ENCODE measurements at regions of chr2 and their contacts with region 1.

Region 1: GRCh38 chr2:135913727-135914365 is 37.6 kb upstream of the MCM6 start:
- DNase-seq: peak in 1 of 2 donors; percentile 84
- ATAC-seq: peak; percentile 59 to 71 (median 70)
- H3K4me3 ChIP-seq: no peak overlapping the region
- H3K4me3 Mint-ChIP-seq: no peak overlapping the region
- H3K27ac ChIP-seq: no peak overlapping the region
- H3K27ac Mint-ChIP-seq: no peak overlapping the region
- H3K4me1 ChIP-seq: no peaks in the 10 kb centered on the region
- H3K4me1 Mint-ChIP-seq: no peaks in the 10 kb centered on the region
- H3K27me3 ChIP-seq: no peaks in the 10 kb centered on the region
- H3K27me3 Mint-ChIP-seq: no peaks in the 10 kb centered on the region
- CTCF ChIP-seq: peak; percentile 94

Region 2: GRCh38 chr2:136378712-136379595 is 465.1 kb after region 1 on chr2:
- intact Hi-C with region 1: loop called (anchors 1 kb)
- DNase-seq: peak; percentile 54 to 90
- ATAC-seq: peak; percentile 61 to 77 (median 76)
- H3K4me3 ChIP-seq: no peak overlapping the region
- H3K4me3 Mint-ChIP-seq: no peak overlapping the region
- H3K27ac ChIP-seq: no peak overlapping the region
- H3K27ac Mint-ChIP-seq: no peak overlapping the region
- H3K4me1 ChIP-seq: peaks cover 21% of the 10 kb centered on the region
- H3K4me1 Mint-ChIP-seq: peaks cover 7 to 26% of the 10 kb centered on the region in 2 donors
- H3K27me3 ChIP-seq: no peaks in the 10 kb centered on the region
- H3K27me3 Mint-ChIP-seq: no peaks in the 10 kb centered on the region
- CTCF ChIP-seq: peak; percentile 80

Region 3: GRCh38 chr2:136384531-136385303 is 470.9 kb after region 1 on chr2:
- intact Hi-C with region 1: loop called (anchors 1 kb)
- DNase-seq: peak in 1 of 2 donors; percentile 83
- ATAC-seq: peak; percentile 73 to 83 (median 80)
- H3K4me3 ChIP-seq: no peak overlapping the region
- H3K4me3 Mint-ChIP-seq: no peak overlapping the region
- H3K27ac ChIP-seq: no peak overlapping the region
- H3K27ac Mint-ChIP-seq: peak overlapping the region in 1 of 2 donors; percentile 8
- H3K4me1 ChIP-seq: peaks cover 13% of the 10 kb centered on the region
- H3K4me1 Mint-ChIP-seq: peaks cover 7 to 17% of the 10 kb centered on the region in 2 donors
- H3K27me3 ChIP-seq: no peaks in the 10 kb centered on the region
- H3K27me3 Mint-ChIP-seq: no peaks in the 10 kb centered on the region
- CTCF ChIP-seq: peak; percentile 58

Region 4: DNA sequence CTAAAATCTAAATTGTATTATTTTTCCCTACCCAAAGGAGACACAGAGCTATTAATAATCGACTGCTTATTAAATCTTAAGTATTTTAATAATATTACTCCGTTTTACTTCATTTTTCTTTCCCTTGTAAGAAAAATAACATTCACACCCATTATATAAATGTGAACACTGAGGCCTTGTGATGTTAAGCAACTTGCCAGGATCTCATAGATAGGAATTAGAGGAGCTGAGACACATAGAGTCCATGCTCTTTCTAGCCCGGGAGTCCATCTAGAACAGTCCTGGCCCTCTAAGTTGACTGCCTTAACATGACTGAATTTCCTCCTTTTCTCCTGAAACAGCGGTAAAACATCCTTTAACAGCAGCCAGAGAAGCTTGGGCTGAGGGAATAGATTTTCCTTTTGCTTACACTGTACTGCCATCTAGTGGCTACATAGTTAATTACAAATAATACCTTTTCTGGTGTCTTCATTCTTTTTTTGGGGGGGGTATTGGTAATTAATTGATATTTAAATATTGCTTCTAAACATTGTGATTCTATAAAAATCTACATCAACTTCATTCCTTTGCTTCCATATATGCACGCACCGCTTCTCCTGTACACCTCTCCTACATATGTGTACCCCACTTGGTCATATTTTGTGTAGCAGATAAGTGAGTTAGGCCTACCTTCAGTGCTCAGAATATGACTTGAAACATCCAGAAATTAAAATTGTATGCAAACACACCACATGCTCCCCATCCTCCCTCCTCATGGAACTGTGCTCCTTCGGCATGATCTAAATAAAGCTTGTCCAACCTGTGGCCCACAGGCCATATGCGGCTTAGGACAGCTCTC is 1924.6 kb after region 1 on chr2:
- intact Hi-C with region 1: loop called (anchors 5 kb)
- DNase-seq: peak in 1 of 2 donors; percentile 53
- ATAC-seq: peak in 1 of 3 donors; percentile 46
- H3K4me3 ChIP-seq: no peak overlapping the region
- H3K4me3 Mint-ChIP-seq: no peak overlapping the region
- H3K27ac ChIP-seq: no peak overlapping the region
- H3K27ac Mint-ChIP-seq: no peak overlapping the region
- H3K4me1 ChIP-seq: no peaks in the 10 kb centered on the region
- H3K4me1 Mint-ChIP-seq: no peaks in the 10 kb centered on the region
- H3K27me3 ChIP-seq: no peaks in the 10 kb centered on the region
- H3K27me3 Mint-ChIP-seq: no peaks in the 10 kb centered on the region
- CTCF ChIP-seq: peak; percentile 52